Ascending aorta (tissue), 2 donors: ENCODE measurements at regions of chr9 and their contacts with region 1.

Region 1: DNA sequence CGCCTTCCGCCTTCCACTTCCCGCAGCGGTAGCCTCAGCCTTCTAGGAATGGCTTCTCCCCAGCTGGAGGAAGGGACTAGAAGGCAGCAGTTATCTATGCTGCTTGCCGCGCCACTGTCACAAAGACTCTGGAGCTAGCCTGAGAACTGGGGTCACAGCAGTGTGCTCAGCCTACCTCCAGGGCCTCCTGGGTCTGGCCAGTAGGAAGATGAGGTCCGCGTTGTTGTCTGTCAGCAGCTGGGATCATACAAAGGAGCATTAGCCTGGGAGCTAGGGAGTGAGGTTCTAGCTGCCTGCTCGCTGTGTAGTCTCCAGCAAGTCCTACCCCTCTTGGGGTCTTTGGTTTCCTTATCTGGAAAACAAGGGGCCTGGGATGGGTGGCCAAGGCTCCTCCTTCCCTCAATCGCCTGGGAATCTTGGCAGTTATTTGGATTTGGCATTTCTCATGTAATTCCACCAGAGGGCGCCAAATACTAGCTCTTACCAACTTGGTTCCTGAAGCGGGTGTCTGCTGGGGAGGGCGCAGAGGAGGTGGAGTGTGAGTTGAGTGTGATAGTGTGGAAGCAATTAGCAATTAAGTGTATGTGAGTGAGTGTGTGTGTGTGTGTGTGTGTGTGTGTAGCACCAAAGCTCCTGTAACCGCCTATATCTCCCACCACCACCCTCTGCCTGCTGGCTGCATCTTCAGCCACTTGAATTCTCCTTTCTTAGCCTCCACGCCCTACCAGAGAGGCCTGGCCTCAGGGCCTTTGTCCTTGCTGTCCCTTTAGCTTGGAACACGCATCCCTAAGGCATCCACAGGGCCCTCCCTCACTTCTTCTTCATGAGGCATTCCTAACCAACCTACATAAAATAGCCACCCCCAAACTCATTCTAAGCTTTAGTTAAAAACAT is 97.1 kb downstream of the ENTREP1 start:
- DNase-seq: no peak
- H3K4me3 ChIP-seq: no peak overlapping the region
- H3K27ac ChIP-seq: no peak overlapping the region
- H3K4me1 ChIP-seq: no peaks in the 10 kb centered on the region
- H3K27me3 ChIP-seq: no peaks in the 10 kb centered on the region
- CTCF ChIP-seq: peak; percentile 63 to 88 (median 67)

Region 2: DNA sequence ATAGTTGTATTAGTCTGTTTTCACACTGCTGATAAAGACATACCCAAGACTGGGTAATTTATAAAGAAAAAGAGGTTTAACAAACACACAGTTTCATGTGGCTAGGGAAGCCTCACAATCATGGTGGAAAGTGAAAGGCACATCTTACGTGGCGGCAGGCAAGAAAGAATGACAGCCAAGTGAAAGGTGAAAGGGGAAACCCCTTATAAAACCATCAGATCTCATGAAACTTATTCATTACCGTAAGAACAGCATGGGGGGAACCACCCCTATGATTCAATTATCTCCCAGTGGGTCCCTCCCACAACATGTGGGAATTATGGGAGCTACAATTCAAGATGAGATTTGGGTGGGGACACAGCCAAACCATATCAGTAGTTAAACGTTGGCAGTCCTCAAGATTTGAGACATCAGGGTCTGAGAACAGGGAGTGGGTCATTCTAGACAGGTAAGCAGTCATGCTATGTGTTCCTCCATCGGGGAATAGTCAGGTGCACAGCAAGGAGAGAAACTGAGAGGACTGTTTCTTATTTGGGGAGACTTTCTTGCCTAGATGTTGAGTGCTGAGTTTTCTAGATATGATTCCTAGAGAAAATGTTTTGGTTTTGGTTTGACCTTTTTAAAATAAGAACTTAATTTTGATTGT is 142.9 kb before region 1 on chr9:
- intact Hi-C with region 1: no loop called
- DNase-seq: no peak
- H3K4me3 ChIP-seq: no peak overlapping the region
- H3K27ac ChIP-seq: no peak overlapping the region
- H3K4me1 ChIP-seq: no peaks in the 10 kb centered on the region
- H3K27me3 ChIP-seq: no peaks in the 10 kb centered on the region
- CTCF ChIP-seq: no peak

Region 3: DNA sequence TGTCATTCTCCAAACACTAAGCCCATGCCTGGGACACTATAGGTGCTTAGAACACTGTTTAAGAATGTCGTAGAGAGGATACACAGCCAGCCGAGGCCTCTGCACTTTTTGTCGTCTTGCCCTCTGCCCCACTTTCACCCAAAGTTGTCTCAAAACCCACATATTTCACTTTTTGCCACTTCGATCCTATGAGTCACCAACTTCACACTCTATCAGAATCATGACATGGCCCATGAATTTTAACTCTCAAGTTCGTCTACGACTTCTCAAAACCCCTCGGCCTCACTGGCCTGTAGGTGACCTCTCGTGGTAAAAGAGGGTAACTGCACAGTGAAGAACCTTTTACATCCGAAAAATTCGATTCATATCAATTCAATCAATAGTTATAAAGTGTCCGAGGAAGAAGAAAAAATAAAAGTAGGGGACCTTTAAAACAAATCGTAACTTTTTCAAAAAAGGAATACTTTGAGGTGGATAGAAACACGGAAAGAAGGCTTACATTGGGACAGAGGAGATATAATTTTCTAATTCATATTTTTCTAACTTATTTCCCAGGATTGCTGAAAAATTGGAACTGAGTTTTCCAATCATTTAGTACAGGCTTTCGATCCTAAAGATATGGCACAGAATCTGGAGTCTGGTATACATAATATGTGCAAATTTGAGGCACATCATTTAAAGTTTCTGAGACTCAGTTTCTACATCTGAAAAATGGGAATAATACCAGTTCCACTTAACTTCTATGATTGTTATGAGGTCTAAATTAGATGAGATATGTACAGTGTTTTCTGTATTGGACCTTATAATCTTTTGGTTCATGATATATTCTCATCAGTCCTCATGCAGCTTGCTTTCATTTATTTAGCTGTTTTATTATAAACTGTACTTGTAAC is 127.4 kb after region 1 on chr9:
- intact Hi-C with region 1: loop called (anchors 2 kb)
- DNase-seq: no peak
- H3K4me3 ChIP-seq: no peak overlapping the region
- H3K27ac ChIP-seq: no peak overlapping the region
- H3K4me1 ChIP-seq: no peaks in the 10 kb centered on the region
- H3K27me3 ChIP-seq: no peaks in the 10 kb centered on the region
- CTCF ChIP-seq: peak; percentile 53 to 82 (median 57)

Region 4: DNA sequence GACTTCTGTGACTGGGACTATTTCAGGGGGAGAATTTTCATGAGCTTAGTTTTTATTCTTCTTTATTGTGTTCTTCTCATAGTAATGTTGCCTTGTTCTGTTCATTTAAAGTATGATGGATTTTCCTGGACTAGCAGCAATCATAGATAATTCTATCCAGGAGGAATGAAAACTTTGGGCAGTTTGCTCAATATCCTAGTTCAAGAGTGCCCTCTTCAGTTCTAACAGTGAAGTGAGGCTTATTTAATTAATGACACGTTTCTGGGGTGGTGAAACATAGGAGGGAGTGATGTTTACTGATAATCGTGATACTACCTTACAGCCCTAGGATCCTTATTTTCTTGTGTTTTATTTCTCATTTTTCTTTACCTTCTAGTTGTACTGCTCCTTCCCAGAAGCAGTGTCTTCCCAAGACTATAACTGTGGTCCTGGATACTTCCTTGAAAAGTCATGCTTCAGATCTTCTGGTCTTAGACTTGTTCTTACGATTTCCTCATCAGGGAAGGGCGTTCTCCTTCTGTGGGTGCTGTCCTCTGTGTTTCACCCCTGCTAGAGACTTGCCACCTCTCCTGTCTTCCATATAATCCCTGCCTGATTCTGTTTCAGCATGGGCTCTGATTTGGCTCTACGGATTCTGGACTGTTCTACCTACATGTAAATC is 455.8 kb after region 1 on chr9:
- intact Hi-C with region 1: loop called (anchors 5 kb)
- DNase-seq: no peak
- H3K4me3 ChIP-seq: no peak overlapping the region
- H3K27ac ChIP-seq: no peak overlapping the region
- H3K4me1 ChIP-seq: no peaks in the 10 kb centered on the region
- H3K27me3 ChIP-seq: no peaks in the 10 kb centered on the region
- CTCF ChIP-seq: peak; percentile 6 to 50 (median 24)

Region 5: GRCh38 chr9:69919461-69920061 is 497.4 kb after region 1 on chr9:
- intact Hi-C with region 1: loop called (anchors 2 kb)
- DNase-seq: no peak
- H3K4me3 ChIP-seq: no peak overlapping the region
- H3K27ac ChIP-seq: no peak overlapping the region
- H3K4me1 ChIP-seq: no peaks in the 10 kb centered on the region
- H3K27me3 ChIP-seq: no peaks in the 10 kb centered on the region
- CTCF ChIP-seq: peak; percentile 39 to 60 (median 55)